ENCODE measurements at regions of chr20 and their contacts with region 1.

Region 1: DNA sequence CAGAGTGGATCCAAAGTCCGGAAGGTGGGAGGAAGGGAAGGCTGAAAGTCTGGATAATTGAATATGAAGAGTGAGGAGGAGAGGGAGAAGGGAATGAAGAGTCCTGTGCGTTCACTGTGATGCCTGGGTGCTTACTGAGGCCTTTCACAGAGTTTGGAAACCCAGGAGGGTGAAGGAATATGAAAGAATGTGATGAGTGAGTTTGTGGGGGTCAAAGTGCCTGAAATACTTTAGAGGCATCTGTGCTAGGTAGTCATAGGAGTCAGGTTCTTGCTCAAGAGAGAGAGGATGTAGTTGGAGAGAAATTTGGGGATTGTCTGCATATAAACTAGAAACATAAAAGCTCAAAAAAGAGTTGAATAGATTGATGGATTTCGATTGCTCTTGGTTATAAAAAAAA is 20.7 kb downstream of the NKX2-4 start:
- DNase-seq: no peak
- H3K4me3 ChIP-seq: no peak overlapping the region
- H3K27ac ChIP-seq: no peak overlapping the region
- H3K4me1 ChIP-seq: peaks cover 15% of the 10 kb centered on the region
- H3K27me3 ChIP-seq: no peaks in the 10 kb centered on the region
- CTCF ChIP-seq: no peak

Region 2: GRCh38 chr20:21166801-21167200 is 209.8 kb before region 1 on chr20:
- CTCF ChIA-PET with region 1: no interaction called
- POLR2A ChIA-PET with region 1: interaction called, 14 read pairs
- intact Hi-C with region 1: no loop called
- DNase-seq: no peak
- H3K4me3 ChIP-seq: no peak overlapping the region
- H3K27ac ChIP-seq: no peak overlapping the region
- H3K4me1 ChIP-seq: no peaks in the 10 kb centered on the region
- H3K27me3 ChIP-seq: no peaks in the 10 kb centered on the region
- CTCF ChIP-seq: no peak

Measured in A673 (cell line).